Tibial artery (tissue), 4 donors: ENCODE measurements at regions of chr9 and their contacts with region 1.

Region 1: DNA sequence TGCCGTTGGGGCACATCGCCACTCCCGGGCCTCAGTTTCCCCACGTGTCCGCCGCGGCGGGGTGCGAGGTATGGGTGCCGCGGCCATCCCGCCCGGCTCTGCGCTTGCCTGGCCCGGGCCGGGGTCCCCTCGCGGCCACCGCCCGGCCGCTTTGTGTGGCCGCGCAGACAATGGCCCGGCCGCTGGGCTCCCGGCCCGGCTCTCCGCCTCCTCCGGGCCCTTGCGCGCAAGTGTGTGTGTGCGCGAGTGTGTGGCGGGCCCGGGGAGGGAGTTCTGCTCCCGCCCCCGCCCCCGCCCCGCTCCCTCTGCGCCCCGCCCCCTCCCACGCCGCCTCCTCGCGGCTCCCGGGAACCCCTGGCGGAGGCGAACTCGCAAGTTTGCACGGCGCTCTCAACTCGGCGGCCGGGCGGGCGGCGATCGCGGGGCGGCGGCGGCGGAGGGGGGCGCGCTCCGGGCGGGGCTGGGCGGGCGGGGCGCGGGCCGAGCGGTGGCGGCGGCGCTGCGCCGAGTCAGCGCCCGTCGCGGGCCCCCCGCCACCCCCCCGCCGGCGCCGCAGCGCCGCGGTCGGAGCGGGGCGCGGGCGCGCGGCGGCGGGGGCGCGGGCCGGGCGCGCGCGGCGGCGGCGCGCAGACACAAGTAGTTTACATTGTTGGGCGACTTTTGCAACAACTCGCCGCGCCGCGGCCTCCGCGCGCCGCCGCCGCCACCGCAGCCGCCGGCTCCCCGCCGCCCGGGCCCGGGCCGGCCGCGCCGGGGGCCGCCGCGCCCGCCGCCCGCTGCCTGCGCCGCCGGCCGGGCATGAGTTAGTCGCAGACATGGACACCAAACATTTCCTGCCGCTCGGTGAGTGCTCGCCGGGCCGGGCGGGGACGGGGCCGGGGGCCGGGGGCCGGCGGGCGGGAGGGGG is at the start of gene RXRA:
- DNase-seq: peak; percentile 76 to 93
- H3K4me3 ChIP-seq: peak within 1 kb of the TSS; percentile 86 to 89
- H3K27ac ChIP-seq: peak within 1 kb of the TSS; percentile 98 to 100
- H3K4me1 ChIP-seq: peaks cover 5 to 67% (median 61%) of the 10 kb centered on the region in 4 donors
- H3K27me3 ChIP-seq: no peaks in the 10 kb centered on the region
- CTCF ChIP-seq: peak in 1 of 2 experiments; percentile 7

Region 2: GRCh38 chr9:134434894-134435506 is 108.9 kb after region 1 on chr9:
- intact Hi-C with region 1: loop called (anchors 5 kb)
- DNase-seq: peak; percentile 97 to 98
- H3K4me3 ChIP-seq: peak overlapping the region; percentile 13 to 42
- H3K27ac ChIP-seq: peak overlapping the region; percentile 71 to 86
- H3K4me1 ChIP-seq: peaks cover 13 to 64% (median 45%) of the 10 kb centered on the region in 4 donors
- H3K27me3 ChIP-seq: no peaks in the 10 kb centered on the region
- CTCF ChIP-seq: no peak